Calu3 (cell line): ENCODE measurements at regions of chr10 and their contacts with region 1.

Region 1: DNA sequence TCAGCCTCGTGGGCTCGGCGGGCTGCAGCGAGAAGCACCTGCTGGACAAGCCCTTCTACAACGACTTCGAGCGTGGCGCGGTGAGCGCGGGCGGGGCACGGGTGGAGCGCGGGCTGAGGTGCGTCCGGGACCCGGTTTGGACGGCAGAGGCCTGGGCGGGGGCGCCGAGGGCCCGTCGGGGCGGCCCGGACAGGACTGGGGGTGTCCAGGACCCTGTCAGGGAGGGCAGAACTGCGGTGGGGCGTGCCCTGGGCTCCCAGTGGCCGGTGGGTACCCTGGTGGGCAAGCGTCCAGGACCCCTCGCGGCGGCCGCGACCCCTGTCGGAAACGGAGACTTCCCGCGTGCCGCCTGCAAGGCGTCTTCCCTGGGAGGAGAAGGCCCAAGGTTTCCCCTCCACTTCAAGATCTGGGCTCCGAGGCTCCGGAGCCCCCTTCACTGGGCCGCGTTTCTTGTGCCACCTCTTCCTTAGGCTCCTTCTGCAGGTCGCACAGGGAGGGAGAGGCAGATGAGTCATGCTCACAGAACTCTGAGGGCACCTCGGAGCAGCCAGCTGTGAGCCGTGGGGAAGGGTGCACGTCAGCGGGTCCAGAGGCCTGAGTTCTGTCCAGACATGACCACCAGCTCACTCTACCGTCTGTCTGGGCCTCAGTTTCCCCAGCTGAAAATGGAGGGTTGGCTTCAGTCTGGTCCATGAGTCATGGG is 485 bp downstream of the ALOX5 start:
- DNase-seq: peak; percentile 43
- H3K4me3 Mint-ChIP-seq: peak overlapping the region; percentile 91
- H3K27ac Mint-ChIP-seq: peak overlapping the region; percentile 47
- H3K4me1 Mint-ChIP-seq: peaks cover 49% of the 10 kb centered on the region
- H3K27me3 Mint-ChIP-seq: peaks cover 14% of the 10 kb centered on the region
- CTCF ChIP-seq: no peak

Region 2: DNA sequence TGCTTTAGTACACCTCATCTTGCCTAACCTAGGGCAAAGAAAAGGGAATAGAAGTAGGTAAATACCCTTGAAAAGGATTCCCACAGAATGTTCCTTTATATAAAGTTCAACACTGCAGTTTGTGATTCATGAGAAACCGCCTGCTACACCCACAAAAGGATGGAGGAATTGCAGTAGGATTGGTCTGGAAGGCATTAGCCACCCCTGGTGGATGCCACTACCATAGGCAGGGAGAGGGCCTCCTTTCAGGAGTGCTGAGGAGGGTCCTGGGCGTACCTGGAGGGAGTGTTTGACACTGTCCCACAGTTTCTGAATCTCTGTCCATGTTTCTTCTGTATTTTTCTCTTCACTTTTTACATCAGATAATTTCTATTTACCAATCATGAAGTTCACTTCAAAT is 685.1 kb before region 1 on chr10:
- CTCF ChIA-PET with region 1: no interaction called
- intact Hi-C with region 1: no loop called
- DNase-seq: no peak
- H3K4me3 Mint-ChIP-seq: no peak overlapping the region
- H3K27ac Mint-ChIP-seq: no peak overlapping the region
- H3K4me1 Mint-ChIP-seq: no peaks in the 10 kb centered on the region
- H3K27me3 Mint-ChIP-seq: no peaks in the 10 kb centered on the region
- CTCF ChIP-seq: no peak

Region 3: GRCh38 chr10:45052700-45053099 is 321.8 kb before region 1 on chr10:
- CTCF ChIA-PET with region 1: no interaction called
- intact Hi-C with region 1: no loop called
- DNase-seq: no peak
- H3K4me3 Mint-ChIP-seq: no peak overlapping the region
- H3K27ac Mint-ChIP-seq: no peak overlapping the region
- H3K4me1 Mint-ChIP-seq: no peaks in the 10 kb centered on the region
- H3K27me3 Mint-ChIP-seq: peaks cover 39% of the 10 kb centered on the region
- CTCF ChIP-seq: no peak

Region 4: DNA sequence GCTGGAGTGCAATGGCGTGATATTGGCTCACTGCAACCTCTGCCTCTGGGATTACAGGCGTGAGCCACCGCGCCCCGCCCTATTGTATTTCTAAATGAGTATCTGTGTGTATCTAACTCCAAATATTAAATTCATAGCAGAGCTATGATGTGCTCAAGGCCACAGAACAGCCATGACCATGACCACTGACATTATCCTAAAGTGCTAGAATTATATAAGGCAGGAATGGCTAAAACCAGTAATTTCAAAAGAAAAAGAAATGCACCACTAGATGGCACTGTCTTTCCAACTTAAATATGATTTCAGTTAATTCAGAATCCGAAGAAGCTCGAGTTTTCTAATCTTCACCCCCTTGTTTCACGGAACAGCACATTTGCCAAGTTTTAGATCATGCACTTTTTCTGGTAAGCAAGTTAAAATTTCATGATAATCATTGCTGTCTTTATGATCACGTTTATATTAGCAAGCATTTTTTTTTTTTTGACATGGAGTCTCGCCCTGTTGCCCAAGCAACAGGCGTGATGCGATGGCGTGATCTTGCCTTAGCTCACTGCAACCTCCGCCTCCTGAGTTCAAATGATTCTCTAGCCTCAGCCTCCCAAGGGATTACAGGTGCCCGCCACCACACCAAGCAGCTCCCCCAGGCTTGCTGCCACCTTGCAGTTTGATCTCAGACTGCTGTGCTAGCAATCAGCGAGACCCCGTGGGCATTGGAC is 124.4 kb before region 1 on chr10:
- CTCF ChIA-PET with region 1: no interaction called
- intact Hi-C with region 1: loop called (anchors 5 kb)
- DNase-seq: peak; percentile 4
- H3K4me3 Mint-ChIP-seq: peak overlapping the region; percentile 49
- H3K27ac Mint-ChIP-seq: no peak overlapping the region
- H3K4me1 Mint-ChIP-seq: no peaks in the 10 kb centered on the region
- H3K27me3 Mint-ChIP-seq: peaks cover 45% of the 10 kb centered on the region
- CTCF ChIP-seq: peak; percentile 31

Region 5: DNA sequence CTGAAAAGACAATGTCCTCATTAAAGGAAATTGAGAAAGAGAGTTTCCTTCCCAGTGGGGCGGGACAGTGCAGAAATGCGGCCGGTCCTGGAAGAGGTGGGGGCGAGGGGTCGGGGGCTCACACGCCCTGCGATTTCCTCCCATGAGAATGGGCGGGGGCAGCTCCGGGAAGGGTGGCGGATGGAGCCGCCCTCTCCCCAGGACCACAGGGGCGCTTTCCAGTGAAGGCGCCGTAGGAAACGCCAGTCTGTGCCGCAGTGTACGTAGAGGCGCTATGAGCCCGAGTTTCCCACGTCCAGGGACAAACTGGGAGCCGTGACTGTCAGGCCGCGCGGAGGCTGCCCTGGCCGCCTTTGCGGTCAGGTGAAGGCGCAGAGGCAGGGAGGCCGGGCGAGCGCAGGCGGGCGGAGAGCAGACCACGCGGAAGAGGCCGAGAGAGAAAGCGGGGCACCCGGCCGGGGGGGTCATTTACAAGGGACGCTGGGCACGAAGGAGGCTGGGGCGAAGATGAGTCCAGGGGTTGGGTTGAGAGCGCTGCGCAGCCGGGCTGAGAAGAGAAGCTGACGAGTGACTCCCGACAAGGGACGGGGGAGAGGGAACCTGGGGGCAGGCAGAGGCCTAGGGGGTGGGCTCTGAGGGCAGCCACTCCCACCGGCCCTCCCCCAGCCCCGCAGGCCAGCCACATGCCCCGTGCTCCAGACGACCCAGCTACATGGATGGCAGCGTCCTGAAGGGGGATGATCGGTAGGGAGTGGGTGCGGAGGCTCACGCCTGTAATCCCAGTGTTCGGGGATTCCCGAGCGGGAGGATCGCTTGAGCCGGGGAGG is 44.6 kb after region 1 on chr10:
- CTCF ChIA-PET with region 1: no interaction called
- intact Hi-C with region 1: loop called (anchors 1 kb)
- DNase-seq: peak; percentile 30
- H3K4me3 Mint-ChIP-seq: peak overlapping the region; percentile 72
- H3K27ac Mint-ChIP-seq: peak overlapping the region; percentile 67
- H3K4me1 Mint-ChIP-seq: peaks cover 30% of the 10 kb centered on the region
- H3K27me3 Mint-ChIP-seq: no peaks in the 10 kb centered on the region
- CTCF ChIP-seq: no peak

Region 6: GRCh38 chr10:45580371-45581215 is 206.1 kb after region 1 on chr10:
- CTCF ChIA-PET with region 1: interaction called, 10 read pairs
- intact Hi-C with region 1: no loop called
- DNase-seq: peak; percentile 4
- H3K4me3 Mint-ChIP-seq: peak overlapping the region; percentile 70
- H3K27ac Mint-ChIP-seq: peak overlapping the region; percentile 75
- H3K4me1 Mint-ChIP-seq: peaks cover 35% of the 10 kb centered on the region
- H3K27me3 Mint-ChIP-seq: no peaks in the 10 kb centered on the region
- CTCF ChIP-seq: no peak